Gastrocnemius medialis (tissue), 4 donors: ENCODE measurements at regions of chr1 and their contacts with region 1.

Region 1: GRCh38 chr1:229843627-229844238 is 217.7 kb downstream of the URB2 start:
- DNase-seq: peak; percentile 90 to 91
- ATAC-seq: peak; percentile 89 to 90
- H3K4me3 ChIP-seq: no peak overlapping the region
- H3K27ac ChIP-seq: peak overlapping the region; percentile 79 to 92 (median 88)
- H3K4me1 ChIP-seq: peaks cover 22 to 33% of the 10 kb centered on the region in 2 donors
- H3K27me3 ChIP-seq: no peaks in the 10 kb centered on the region
- CTCF ChIP-seq: peak; percentile 46 to 65 (median 50)
- POLR2A ChIP-seq: peak in 1 of 2 donors; percentile 33

Region 2: DNA sequence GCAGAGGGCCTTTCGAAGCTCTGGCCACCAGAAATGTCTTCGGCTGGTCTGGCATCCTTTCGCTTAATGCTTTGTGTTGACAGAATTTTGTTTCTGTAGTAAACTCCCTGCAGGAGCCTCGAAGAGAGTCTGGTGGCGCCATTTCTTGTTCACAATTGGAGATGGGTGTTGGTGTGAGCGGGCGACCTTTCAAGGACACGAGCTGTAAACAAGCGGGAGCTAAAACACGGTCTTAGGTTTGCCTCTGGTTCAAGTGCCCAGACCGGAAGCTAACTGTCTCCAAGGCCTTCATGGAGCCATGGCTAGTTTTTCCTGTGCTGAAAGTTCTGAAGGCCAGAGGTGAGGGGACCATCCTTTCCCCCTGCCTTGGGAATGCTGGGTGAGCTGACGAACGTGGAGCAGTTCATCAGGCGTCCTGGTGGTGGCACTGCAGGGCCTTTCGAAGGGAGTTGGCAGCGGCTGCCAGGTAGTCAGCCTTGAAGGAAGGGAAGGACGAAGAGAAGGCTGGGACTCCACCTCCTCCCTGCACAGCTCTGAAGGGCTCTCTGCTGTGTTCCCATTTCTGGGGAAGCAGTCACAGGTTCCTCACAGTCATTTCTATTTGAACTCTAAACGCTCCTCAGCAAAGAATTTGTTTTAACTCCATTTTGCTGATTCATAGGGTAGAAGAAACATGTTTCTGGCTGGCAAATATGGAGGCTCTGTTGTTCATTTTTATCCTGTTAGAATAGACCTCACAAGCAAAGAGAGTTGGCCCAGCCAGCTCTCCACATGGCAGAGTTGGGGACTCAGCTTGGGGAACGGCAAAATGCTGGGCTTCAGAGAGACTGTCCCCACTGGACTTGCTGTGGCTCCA is 182.5 kb before region 1 on chr1:
- in situ Hi-C with region 1: no loop called
- intact Hi-C with region 1: loop called (anchors 5 kb)
- DNase-seq: peak; percentile 64 to 79
- ATAC-seq: peak; percentile 86 to 94
- H3K4me3 ChIP-seq: no peak overlapping the region
- H3K27ac ChIP-seq: peak overlapping the region in 1 of 4 donors; percentile 12
- H3K4me1 ChIP-seq: peaks cover 0 to 7% of the 10 kb centered on the region in 2 donors
- H3K27me3 ChIP-seq: no peaks in the 10 kb centered on the region
- CTCF ChIP-seq: peak; percentile 84 to 93 (median 86)
- POLR2A ChIP-seq: no peak

Region 3: DNA sequence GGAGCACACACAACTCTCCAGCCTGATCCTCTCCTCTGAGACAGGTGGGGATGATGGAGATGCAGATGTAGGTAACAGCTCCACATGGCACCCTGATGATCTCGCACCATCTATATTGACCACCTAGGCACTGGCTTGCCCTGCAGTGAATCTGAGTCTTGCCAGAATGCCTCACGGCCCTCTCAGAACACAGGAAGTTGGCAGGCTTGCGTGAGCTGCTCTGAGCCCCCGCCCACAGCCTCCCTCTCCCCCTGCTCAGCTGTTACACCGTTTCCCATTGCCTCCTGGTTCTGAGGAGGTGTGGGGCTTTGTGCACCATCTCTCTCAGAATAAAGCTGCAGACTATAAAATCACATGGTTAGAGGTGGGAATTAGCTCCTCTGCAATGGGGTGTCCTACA is 169.7 kb before region 1 on chr1:
- in situ Hi-C with region 1: no loop called
- intact Hi-C with region 1: no loop called
- DNase-seq: no peak
- ATAC-seq: no peak
- H3K4me3 ChIP-seq: no peak overlapping the region
- H3K27ac ChIP-seq: no peak overlapping the region
- H3K4me1 ChIP-seq: no peaks in the 10 kb centered on the region
- H3K27me3 ChIP-seq: no peaks in the 10 kb centered on the region
- CTCF ChIP-seq: no peak
- POLR2A ChIP-seq: no peak

Region 4: GRCh38 chr1:229887043-229887822 is 43.5 kb after region 1 on chr1:
- in situ Hi-C with region 1: loop called in 1 of 4 experiments (anchors 10 kb)
- intact Hi-C with region 1: loop called (anchors 1 kb)
- DNase-seq: peak; percentile 78 to 88
- ATAC-seq: peak; percentile 84 to 86
- H3K4me3 ChIP-seq: no peak overlapping the region
- H3K27ac ChIP-seq: peak overlapping the region; percentile 84 to 97 (median 95)
- H3K4me1 ChIP-seq: peaks cover 42 to 55% of the 10 kb centered on the region in 2 donors
- H3K27me3 ChIP-seq: no peaks in the 10 kb centered on the region
- CTCF ChIP-seq: no peak
- POLR2A ChIP-seq: no peak

Region 5: GRCh38 chr1:230066466-230067404 is 223.0 kb after region 1 on chr1 and contains the start of gene GALNT2:
- in situ Hi-C with region 1: loop called in 1 of 4 experiments (anchors 5 kb)
- intact Hi-C with region 1: loop called (anchors 1 kb)
- DNase-seq: peak; percentile 73 to 85
- ATAC-seq: peak; percentile 76 to 77
- H3K4me3 ChIP-seq: peak within 1 kb of the TSS; percentile 73 to 88 (median 80)
- H3K27ac ChIP-seq: peak within 1 kb of the TSS; percentile 90 to 97 (median 97)
- H3K4me1 ChIP-seq: peaks cover 42 to 43% of the 10 kb centered on the region in 2 donors
- H3K27me3 ChIP-seq: no peaks in the 10 kb centered on the region
- CTCF ChIP-seq: peak in 1 of 5 experiments; percentile 11
- POLR2A ChIP-seq: peak; percentile 94 to 96
- total RNA-seq, gene GALNT2: 73.7 to 106 (median 78.3) TPM

Region 6: DNA sequence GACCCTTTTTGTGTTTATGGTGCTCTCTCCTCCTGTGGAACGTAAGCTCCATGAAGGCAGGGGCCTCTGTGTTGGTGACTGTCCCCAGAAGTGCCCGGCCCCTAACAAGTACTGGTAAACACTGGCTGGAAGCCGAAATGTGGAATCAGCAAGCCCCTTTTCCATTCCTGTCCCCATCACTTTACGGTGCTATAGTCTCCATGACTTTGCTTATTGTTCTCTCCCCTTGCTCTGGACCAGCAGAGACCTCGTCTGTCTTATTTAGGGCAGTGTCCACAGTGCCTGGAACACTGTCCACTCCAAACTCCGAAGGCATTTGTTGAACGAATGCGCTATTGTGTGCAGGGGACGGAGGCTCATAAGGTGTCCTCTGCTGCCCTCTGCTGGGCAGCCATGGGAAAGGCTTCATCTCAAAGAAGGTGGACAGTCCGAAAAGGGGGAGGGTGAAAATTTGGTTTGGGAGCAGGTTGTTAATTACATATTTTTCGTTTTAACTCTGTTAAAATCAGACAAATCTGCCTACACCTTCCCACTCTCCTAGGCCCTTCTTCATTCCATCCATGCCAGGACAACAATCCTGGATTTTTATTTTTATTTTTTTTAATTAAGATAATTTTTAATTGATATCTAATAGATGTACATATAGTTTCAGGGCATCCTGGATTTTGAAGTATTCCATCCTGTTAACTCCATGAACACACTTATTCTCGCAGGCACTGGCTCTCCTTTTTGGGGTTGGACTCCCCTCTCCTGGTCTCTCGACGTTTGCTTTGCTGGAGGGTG is 466.8 kb after region 1 on chr1:
- in situ Hi-C with region 1: no loop called
- intact Hi-C with region 1: loop called (anchors 5 kb)
- DNase-seq: peak; percentile 42 to 67
- ATAC-seq: peak; percentile 85 to 91
- H3K4me3 ChIP-seq: no peak overlapping the region
- H3K27ac ChIP-seq: peak overlapping the region in 1 of 4 donors; percentile 40
- H3K4me1 ChIP-seq: peaks cover 0 to 8% of the 10 kb centered on the region in 2 donors
- H3K27me3 ChIP-seq: no peaks in the 10 kb centered on the region
- CTCF ChIP-seq: peak; percentile 87 to 93 (median 92)
- POLR2A ChIP-seq: no peak